B cell (primary cell): ENCODE measurements at regions of chr12 and their contacts with region 1.

Region 1: DNA sequence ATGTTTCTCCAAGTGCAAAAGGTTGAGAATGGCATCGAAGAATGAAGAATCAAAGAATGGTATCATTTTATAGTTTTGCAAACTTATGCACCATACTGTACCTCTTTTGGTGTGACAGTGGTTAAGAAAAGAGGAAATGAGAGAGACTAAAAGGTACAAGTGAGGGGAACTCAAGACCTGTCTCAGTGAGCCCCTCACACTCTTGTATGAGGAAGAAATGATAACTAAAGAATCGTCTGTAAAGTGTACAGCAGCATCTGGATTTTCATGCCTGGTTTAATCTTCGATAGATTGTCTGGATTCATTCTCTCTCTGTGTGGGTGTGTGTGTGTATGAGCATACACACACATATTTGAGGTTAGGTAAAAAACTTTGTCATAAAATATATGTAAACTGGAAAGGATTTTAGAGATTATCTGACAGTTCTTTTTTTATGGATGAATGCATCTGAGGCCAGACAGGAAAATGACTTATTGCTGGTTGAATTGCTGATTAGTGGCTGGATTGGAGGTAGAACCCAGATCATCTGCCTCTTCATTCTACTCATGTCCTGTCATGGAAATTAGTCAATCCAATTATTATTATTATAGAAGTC is 16.0 kb upstream of the SLC38A2 start:
- DNase-seq: peak; percentile 83
- ATAC-seq: peak; percentile 60
- H3K4me3 ChIP-seq: peak overlapping the region in 4 of 5 experiments; percentile 10 to 57 (median 28)
- H3K4me3 Mint-ChIP-seq: peak overlapping the region; percentile 75
- H3K27ac ChIP-seq: peak overlapping the region; percentile 51 to 94
- H3K27ac Mint-ChIP-seq: peak overlapping the region; percentile 87
- H3K4me1 ChIP-seq: peaks cover 67 to 69% of the 10 kb centered on the region in 2 donors
- H3K4me1 Mint-ChIP-seq: peaks cover 75% of the 10 kb centered on the region
- H3K27me3 ChIP-seq: no peaks in the 10 kb centered on the region
- H3K27me3 Mint-ChIP-seq: no peaks in the 10 kb centered on the region
- CTCF ChIP-seq: no peak

Region 2: GRCh38 chr12:46401662-46402061 is 13.1 kb after region 1 on chr12:
- CTCF ChIA-PET with region 1: no interaction called
- POLR2A ChIA-PET with region 1: no interaction called
- intact Hi-C with region 1: loop called (anchors 2 kb)
- DNase-seq: no peak
- ATAC-seq: no peak
- H3K4me3 ChIP-seq: no peak overlapping the region
- H3K4me3 Mint-ChIP-seq: no peak overlapping the region
- H3K27ac ChIP-seq: no peak overlapping the region
- H3K27ac Mint-ChIP-seq: no peak overlapping the region
- H3K4me1 ChIP-seq: peaks cover 20 to 26% of the 10 kb centered on the region in 2 donors
- H3K4me1 Mint-ChIP-seq: peaks cover 53% of the 10 kb centered on the region
- H3K27me3 ChIP-seq: no peaks in the 10 kb centered on the region
- H3K27me3 Mint-ChIP-seq: no peaks in the 10 kb centered on the region
- CTCF ChIP-seq: no peak

Region 3: GRCh38 chr12:46419675-46420074 is 31.2 kb after region 1 on chr12:
- CTCF ChIA-PET with region 1: no interaction called
- POLR2A ChIA-PET with region 1: no interaction called
- intact Hi-C with region 1: no loop called
- DNase-seq: no peak
- ATAC-seq: no peak
- H3K4me3 ChIP-seq: no peak overlapping the region
- H3K4me3 Mint-ChIP-seq: no peak overlapping the region
- H3K27ac ChIP-seq: no peak overlapping the region
- H3K27ac Mint-ChIP-seq: no peak overlapping the region
- H3K4me1 ChIP-seq: no peaks in the 10 kb centered on the region
- H3K4me1 Mint-ChIP-seq: no peaks in the 10 kb centered on the region
- H3K27me3 ChIP-seq: no peaks in the 10 kb centered on the region
- H3K27me3 Mint-ChIP-seq: no peaks in the 10 kb centered on the region
- CTCF ChIP-seq: no peak

Region 4: DNA sequence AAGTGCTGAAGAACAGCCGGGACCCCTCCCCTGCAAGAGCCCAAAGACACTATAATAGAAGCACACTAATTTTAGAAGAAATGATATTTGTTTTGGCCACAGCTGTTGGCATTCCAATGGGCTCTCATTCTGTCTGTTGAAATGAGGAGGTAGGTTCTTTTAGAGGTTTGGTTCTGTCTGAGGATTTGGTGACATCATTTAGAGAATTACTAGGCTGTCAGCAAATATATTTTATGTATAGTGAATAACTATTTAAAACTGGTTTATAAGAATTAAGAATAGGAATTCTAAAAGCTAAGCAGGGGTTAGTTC is 184.8 kb after region 1 on chr12:
- CTCF ChIA-PET with region 1: no interaction called
- POLR2A ChIA-PET with region 1: no interaction called
- intact Hi-C with region 1: no loop called
- DNase-seq: no peak
- ATAC-seq: no peak
- H3K4me3 ChIP-seq: no peak overlapping the region
- H3K4me3 Mint-ChIP-seq: no peak overlapping the region
- H3K27ac ChIP-seq: no peak overlapping the region
- H3K27ac Mint-ChIP-seq: no peak overlapping the region
- H3K4me1 ChIP-seq: no peaks in the 10 kb centered on the region
- H3K4me1 Mint-ChIP-seq: no peaks in the 10 kb centered on the region
- H3K27me3 ChIP-seq: no peaks in the 10 kb centered on the region
- H3K27me3 Mint-ChIP-seq: no peaks in the 10 kb centered on the region
- CTCF ChIP-seq: no peak